ENCODE measurements at regions of chr9 and their contacts with region 1.

Region 1: GRCh38 chr9:1869843-1870242 is 145.3 kb upstream of the SMARCA2 start:
- DNase-seq: peak; percentile 27
- CTCF ChIP-seq: peak; percentile 63

Region 2: GRCh38 chr9:1939926-1940368 is 70.1 kb after region 1 on chr9:
- in situ Hi-C with region 1: loop called (anchors 5 kb)
- DNase-seq: peak; percentile 73
- CTCF ChIP-seq: peak; percentile 86

Measured in GM13977 (cell line).